ENCODE measurements at regions of chr2 and their contacts with region 1.

Region 1: DNA sequence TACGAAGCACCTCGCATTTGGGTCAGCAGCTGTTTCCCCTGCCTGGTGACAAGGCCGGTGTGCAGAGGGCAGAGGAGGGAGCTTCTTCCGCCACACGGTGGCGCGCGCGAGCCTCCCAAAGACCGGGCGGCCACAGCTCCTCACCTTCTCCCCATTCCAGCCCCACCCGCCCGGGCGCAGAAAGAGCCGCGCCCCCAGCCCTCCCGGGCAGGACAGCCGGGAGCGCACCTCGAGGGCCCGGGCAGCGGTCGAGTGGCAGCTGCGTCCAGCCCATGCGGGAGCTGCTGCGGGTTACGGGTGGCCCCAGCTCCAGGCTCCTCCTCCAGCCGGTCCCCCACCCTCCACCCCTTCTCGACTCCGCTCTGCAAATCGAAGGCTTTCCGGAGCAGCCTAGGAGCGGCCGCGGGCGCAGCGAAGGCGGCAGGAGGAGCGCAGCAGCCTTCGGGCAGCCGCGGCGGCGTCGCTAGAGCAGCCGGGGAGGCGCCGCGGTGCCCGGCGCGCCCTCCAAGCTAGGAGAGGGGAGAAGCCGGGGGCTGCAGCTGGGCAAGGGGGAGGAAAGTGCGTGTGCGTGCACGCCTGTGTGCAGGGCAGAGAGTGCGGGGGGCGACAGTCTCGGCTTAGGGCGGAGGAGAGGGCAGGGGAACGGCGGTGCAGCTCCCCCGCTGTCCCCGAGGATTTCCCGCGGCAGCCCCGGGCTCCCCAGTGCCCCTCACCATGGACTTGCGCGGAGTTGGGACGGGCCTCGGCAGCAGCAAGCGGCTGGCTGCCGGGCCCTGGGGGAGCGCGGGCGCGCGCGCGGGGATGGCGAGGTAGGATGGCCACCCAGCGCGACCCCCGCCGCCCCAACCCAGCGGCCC is at the start of gene CCDC85A:
- DNase-seq: peak; percentile 80 to 90
- H3K4me3 ChIP-seq: peak within 1 kb of the TSS; percentile 40
- H3K4me3 Mint-ChIP-seq: peak within 1 kb of the TSS; percentile 65
- H3K27ac Mint-ChIP-seq: no peak within 1 kb of the TSS
- H3K4me1 ChIP-seq: 0 out of 2 replicates have a peak, but pooled peaks cover 9% of the 10 kb centered on the region
- H3K4me1 Mint-ChIP-seq: peaks cover 10% of the 10 kb centered on the region
- H3K27me3 ChIP-seq: peaks cover 8% of the 10 kb centered on the region
- H3K27me3 Mint-ChIP-seq: peaks cover 34% of the 10 kb centered on the region
- CTCF ChIP-seq: peak; percentile 91 to 96
- total RNA-seq, gene CCDC85A: not detected in 2 replicates

Region 2: DNA sequence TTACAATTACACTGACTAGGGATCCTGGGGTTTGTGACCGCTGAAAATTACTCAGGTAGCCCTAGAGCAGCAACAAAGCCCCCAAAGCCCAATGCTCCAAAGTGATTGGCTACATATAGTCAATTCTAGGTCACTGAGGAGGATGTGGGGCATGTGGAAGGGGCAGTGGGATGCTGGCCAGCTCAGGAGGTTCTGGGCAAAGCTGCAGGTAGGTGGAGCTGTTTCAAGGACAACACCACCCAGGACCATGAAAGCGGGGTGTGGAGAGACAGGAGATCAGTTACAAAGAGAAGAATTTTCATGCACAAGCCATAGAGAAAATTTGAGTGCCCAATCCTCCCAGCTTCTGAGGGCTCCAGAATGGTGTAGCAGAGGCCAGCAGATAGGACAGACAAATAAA is 75.1 kb before region 1 on chr2:
- CTCF ChIA-PET with region 1: no interaction called
- POLR2A ChIA-PET with region 1: no interaction called
- intact Hi-C with region 1: no loop called
- DNase-seq: peak in 1 of 2 experiments; percentile 20
- H3K4me3 ChIP-seq: no peak overlapping the region
- H3K4me3 Mint-ChIP-seq: no peak overlapping the region
- H3K27ac Mint-ChIP-seq: no peak overlapping the region
- H3K4me1 ChIP-seq: no peaks in the 10 kb centered on the region
- H3K4me1 Mint-ChIP-seq: peaks cover 7% of the 10 kb centered on the region
- H3K27me3 ChIP-seq: no peaks in the 10 kb centered on the region
- H3K27me3 Mint-ChIP-seq: peaks cover 18% of the 10 kb centered on the region
- CTCF ChIP-seq: peak; percentile 28 to 33

Region 3: GRCh38 chr2:56167616-56168562 is 16.0 kb before region 1 on chr2:
- CTCF ChIA-PET with region 1: no interaction called
- POLR2A ChIA-PET with region 1: no interaction called
- intact Hi-C with region 1: no loop called
- DNase-seq: no peak
- H3K4me3 ChIP-seq: no peak overlapping the region
- H3K4me3 Mint-ChIP-seq: no peak overlapping the region
- H3K27ac Mint-ChIP-seq: no peak overlapping the region
- H3K4me1 ChIP-seq: no peaks in the 10 kb centered on the region
- H3K4me1 Mint-ChIP-seq: no peaks in the 10 kb centered on the region
- H3K27me3 ChIP-seq: no peaks in the 10 kb centered on the region; the same call in 1 of the 2 replicates
- H3K27me3 Mint-ChIP-seq: peaks cover 9% of the 10 kb centered on the region
- CTCF ChIP-seq: no peak

Region 4: DNA sequence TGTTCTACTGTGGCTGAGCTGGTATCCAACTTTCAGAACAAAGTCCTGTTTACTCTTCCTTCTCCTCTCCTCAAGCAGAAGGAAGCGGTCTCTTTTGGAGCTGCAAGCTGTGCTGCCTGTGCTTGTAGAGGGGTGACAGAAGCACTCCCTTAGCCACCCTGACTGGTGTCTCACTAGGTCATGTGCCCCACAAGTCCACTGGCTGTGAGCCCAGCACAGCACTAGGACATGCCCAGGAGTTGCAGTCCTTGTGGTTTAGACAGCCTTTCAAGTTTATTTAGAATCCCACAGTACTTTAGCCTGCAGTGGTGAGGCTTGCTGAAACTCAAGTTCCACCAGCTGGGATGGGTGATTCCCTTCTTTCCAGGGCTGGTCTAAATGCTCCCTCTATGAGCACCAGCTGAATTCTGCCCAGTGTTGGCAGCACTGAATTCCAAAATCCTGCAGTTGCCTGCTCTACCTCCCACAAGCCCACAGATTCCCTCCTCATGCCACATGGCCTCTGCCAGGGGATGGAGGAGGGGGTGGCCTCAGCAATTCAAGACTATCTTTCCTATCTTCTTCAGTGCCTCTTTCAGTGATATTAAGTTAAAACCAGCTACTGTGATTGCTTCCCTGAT is 61.1 kb after region 1 on chr2:
- CTCF ChIA-PET with region 1: no interaction called
- POLR2A ChIA-PET with region 1: no interaction called
- intact Hi-C with region 1: no loop called
- DNase-seq: no peak
- H3K4me3 ChIP-seq: no peak overlapping the region
- H3K4me3 Mint-ChIP-seq: no peak overlapping the region
- H3K27ac Mint-ChIP-seq: no peak overlapping the region
- H3K4me1 ChIP-seq: no peaks in the 10 kb centered on the region; the same call in 1 of the 2 replicates
- H3K4me1 Mint-ChIP-seq: no peaks in the 10 kb centered on the region
- H3K27me3 ChIP-seq: no peaks in the 10 kb centered on the region
- H3K27me3 Mint-ChIP-seq: peaks cover 2% of the 10 kb centered on the region
- CTCF ChIP-seq: no peak

Region 5: GRCh38 chr2:56749152-56749752 is 565.4 kb after region 1 on chr2:
- CTCF ChIA-PET with region 1: interaction called, 4 read pairs
- POLR2A ChIA-PET with region 1: no interaction called
- intact Hi-C with region 1: loop called (anchors 1 kb)
- DNase-seq: no peak
- H3K4me3 ChIP-seq: no peak overlapping the region
- H3K4me3 Mint-ChIP-seq: no peak overlapping the region
- H3K27ac Mint-ChIP-seq: no peak overlapping the region
- H3K4me1 ChIP-seq: no peaks in the 10 kb centered on the region
- H3K4me1 Mint-ChIP-seq: no peaks in the 10 kb centered on the region
- H3K27me3 ChIP-seq: no peaks in the 10 kb centered on the region
- H3K27me3 Mint-ChIP-seq: peaks cover 4% of the 10 kb centered on the region
- CTCF ChIP-seq: peak; percentile 47 to 51

Region 6: GRCh38 chr2:57376985-57377384 is 1193.1 kb after region 1 on chr2:
- CTCF ChIA-PET with region 1: no interaction called
- POLR2A ChIA-PET with region 1: no interaction called
- intact Hi-C with region 1: loop called (anchors 10 kb)
- DNase-seq: no peak
- H3K4me3 ChIP-seq: no peak overlapping the region
- H3K4me3 Mint-ChIP-seq: no peak overlapping the region
- H3K27ac Mint-ChIP-seq: no peak overlapping the region
- H3K4me1 ChIP-seq: peaks cover 34% of the 10 kb centered on the region
- H3K4me1 Mint-ChIP-seq: peaks cover 22% of the 10 kb centered on the region
- H3K27me3 ChIP-seq: no peaks in the 10 kb centered on the region
- H3K27me3 Mint-ChIP-seq: no peaks in the 10 kb centered on the region
- CTCF ChIP-seq: peak; percentile 1 to 30

Region 7: GRCh38 chr2:57516698-57517340 is 1332.9 kb after region 1 on chr2:
- CTCF ChIA-PET with region 1: no interaction called
- POLR2A ChIA-PET with region 1: no interaction called
- intact Hi-C with region 1: loop called (anchors 1 kb)
- DNase-seq: no peak
- H3K4me3 ChIP-seq: no peak overlapping the region
- H3K4me3 Mint-ChIP-seq: no peak overlapping the region
- H3K27ac Mint-ChIP-seq: no peak overlapping the region
- H3K4me1 ChIP-seq: no peaks in the 10 kb centered on the region
- H3K4me1 Mint-ChIP-seq: no peaks in the 10 kb centered on the region
- H3K27me3 ChIP-seq: no peaks in the 10 kb centered on the region
- H3K27me3 Mint-ChIP-seq: peaks cover 2% of the 10 kb centered on the region
- CTCF ChIP-seq: peak; percentile 40 to 43

Measured in Caco-2 (cell line).